Vagina (tissue), 2 donors: ENCODE measurements at regions of chr2 and their contacts with region 1.

Region 1: DNA sequence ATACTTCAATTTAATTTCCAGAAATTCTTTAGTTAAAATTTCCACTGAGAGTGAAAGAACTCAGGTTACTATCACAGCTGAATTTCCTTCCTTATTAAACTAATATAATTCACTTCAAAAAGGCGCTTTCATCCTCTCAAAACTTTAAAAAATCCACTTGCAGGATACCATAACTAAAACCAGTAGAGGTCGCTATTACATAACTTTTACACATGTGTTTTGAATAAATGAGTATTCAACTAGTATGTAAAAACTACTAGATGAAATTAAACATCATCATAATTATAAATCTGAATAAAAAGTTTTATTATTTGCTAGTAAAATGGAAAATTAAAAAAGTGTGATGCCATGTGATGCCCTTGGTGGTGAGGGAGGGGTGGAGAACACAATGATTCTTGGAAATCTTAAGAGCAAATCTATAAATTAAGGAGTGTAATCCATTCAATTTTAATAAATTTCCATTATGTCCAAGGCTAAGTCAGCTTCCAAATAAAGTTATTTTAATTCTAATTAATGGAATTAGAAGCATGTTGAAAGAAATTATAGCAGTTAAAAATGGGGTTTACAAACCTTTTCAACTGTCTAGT is 61.4 kb downstream of the SOS1 start:
- DNase-seq: no peak
- H3K4me3 ChIP-seq: no peak overlapping the region
- H3K27ac ChIP-seq: no peak overlapping the region
- H3K4me1 ChIP-seq: peaks cover 10% of the 10 kb centered on the region
- H3K27me3 ChIP-seq: no peaks in the 10 kb centered on the region
- CTCF ChIP-seq: peak; percentile 18 to 62 (median 53)
- POLR2A ChIP-seq: no peak

Region 2: GRCh38 chr2:39227628-39228412 is 168.4 kb after region 1 on chr2:
- intact Hi-C with region 1: loop called (anchors 5 kb)
- DNase-seq: no peak
- H3K4me3 ChIP-seq: no peak overlapping the region
- H3K27ac ChIP-seq: no peak overlapping the region
- H3K4me1 ChIP-seq: peaks cover 4% of the 10 kb centered on the region
- H3K27me3 ChIP-seq: no peaks in the 10 kb centered on the region
- CTCF ChIP-seq: peak; percentile 43 to 94 (median 81)
- POLR2A ChIP-seq: no peak